Natural killer cell (primary cell): ENCODE measurements at regions of chr14 and their contacts with region 1.

Region 1: DNA sequence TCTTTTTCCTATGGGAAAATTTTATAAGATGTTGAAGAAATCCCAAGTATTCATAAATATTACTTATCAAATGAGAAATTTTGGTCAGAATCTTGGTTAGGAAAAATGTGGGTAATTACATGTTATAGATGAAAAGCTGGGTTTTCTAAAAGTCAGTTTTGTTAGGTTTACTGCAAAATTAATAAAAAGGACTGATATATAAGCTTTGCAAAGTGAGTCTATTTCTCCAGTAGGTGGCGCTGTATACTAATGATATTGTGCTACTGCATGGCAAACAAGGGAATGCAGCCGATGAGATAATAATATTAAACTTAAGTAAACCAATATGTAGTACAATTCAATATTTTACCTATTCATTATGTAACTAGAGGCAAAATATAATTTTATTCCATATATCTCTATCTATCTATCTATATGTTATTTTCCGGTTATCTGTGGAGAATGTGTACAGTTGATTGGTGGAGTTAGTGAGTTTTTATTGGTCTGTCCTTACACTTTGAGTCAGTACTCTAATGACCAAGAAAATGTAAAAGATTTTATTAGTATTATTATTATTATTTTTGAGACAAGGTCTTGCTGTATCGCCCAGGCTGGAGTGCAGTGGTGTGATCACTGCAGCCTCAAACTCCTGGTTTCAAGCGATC is 32.9 kb downstream of the MIPOL1 start:
- DNase-seq: peak in 1 of 2 donors; percentile 40
- ATAC-seq: no peak
- H3K4me3 ChIP-seq: no peak overlapping the region
- H3K4me3 Mint-ChIP-seq: no peak overlapping the region
- H3K27ac ChIP-seq: no peak overlapping the region
- H3K27ac Mint-ChIP-seq: no peak overlapping the region
- H3K4me1 ChIP-seq: no peaks in the 10 kb centered on the region
- H3K4me1 Mint-ChIP-seq: no peaks in the 10 kb centered on the region
- H3K27me3 ChIP-seq: no peaks in the 10 kb centered on the region
- H3K27me3 Mint-ChIP-seq: no peaks in the 10 kb centered on the region
- CTCF ChIP-seq: peak; percentile 58

Region 2: DNA sequence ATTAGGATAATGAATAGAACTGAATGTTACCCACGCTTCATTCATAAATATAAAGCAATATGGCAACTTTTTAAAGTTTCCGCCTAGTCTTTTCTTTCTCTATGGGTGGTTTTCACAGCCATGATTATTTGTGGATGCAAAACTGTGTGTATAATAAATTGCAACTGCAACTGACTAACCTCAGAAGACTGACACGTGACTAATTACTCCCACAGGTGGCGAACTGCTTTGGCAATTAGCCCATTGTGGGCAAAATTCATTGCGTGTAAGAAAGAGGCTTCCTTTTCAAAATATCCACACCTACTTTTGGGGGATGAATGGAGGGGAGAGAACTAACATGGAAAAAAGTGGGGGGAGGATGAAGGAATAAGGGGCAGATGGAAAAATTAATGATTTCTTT is 137.3 kb before region 1 on chr14:
- intact Hi-C with region 1: no loop called
- DNase-seq: no peak
- ATAC-seq: no peak
- H3K4me3 ChIP-seq: no peak overlapping the region
- H3K4me3 Mint-ChIP-seq: no peak overlapping the region
- H3K27ac ChIP-seq: no peak overlapping the region
- H3K27ac Mint-ChIP-seq: no peak overlapping the region
- H3K4me1 ChIP-seq: no peaks in the 10 kb centered on the region
- H3K4me1 Mint-ChIP-seq: no peaks in the 10 kb centered on the region
- H3K27me3 ChIP-seq: no peaks in the 10 kb centered on the region
- H3K27me3 Mint-ChIP-seq: no peaks in the 10 kb centered on the region
- CTCF ChIP-seq: no peak

Region 3: GRCh38 chr14:37202265-37202664 is 28.4 kb before region 1 on chr14:
- intact Hi-C with region 1: no loop called
- DNase-seq: no peak
- ATAC-seq: no peak
- H3K4me3 ChIP-seq: no peak overlapping the region
- H3K4me3 Mint-ChIP-seq: no peak overlapping the region
- H3K27ac ChIP-seq: no peak overlapping the region
- H3K27ac Mint-ChIP-seq: no peak overlapping the region
- H3K4me1 ChIP-seq: no peaks in the 10 kb centered on the region
- H3K4me1 Mint-ChIP-seq: no peaks in the 10 kb centered on the region
- H3K27me3 ChIP-seq: peaks cover 2% of the 10 kb centered on the region
- H3K27me3 Mint-ChIP-seq: peaks cover 0 to 8% of the 10 kb centered on the region in 2 donors
- CTCF ChIP-seq: no peak

Region 4: DNA sequence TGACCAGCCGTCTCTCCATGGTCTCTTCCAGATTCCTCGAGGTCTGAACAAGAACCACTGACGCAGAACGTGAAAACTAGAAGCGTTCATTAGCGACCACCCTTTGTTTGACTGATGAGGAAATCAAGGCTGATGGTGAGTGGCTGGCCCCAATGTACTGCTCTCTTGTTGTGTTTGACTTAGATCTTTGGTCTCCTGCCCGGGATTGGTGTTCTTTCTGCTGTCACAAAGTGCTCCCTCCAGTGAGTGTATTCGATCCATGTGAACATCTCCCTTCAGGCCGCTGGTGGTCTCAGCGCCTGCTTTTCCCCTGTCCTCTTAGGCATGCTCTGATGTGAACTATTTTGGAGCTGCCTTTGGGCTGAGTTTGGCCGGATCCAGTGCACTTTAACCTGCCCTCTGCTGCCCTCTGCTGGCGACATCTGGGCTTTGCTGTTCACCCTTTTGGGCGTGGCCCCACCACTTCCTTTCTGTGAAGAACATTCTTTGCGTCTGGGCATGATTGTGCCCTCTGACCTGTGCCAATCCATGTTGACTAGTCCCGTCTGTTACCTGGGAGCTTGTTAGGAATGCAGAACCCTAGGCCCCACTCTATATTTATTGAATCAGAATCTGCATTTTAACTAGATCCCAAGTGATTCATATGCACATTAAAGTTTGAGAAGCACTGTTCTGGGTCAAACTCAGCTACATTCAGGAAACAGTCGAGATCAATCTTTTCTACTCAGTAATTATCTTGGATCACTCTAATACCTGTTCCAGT is 643.9 kb after region 1 on chr14:
- intact Hi-C with region 1: loop called (anchors 5 kb)
- DNase-seq: peak; percentile 65 to 80
- ATAC-seq: peak; percentile 87 to 95 (median 88)
- H3K4me3 ChIP-seq: no peak overlapping the region
- H3K4me3 Mint-ChIP-seq: no peak overlapping the region
- H3K27ac ChIP-seq: no peak overlapping the region
- H3K27ac Mint-ChIP-seq: no peak overlapping the region
- H3K4me1 ChIP-seq: peaks cover 4% of the 10 kb centered on the region
- H3K4me1 Mint-ChIP-seq: peaks cover 8 to 9% of the 10 kb centered on the region in 2 donors
- H3K27me3 ChIP-seq: no peaks in the 10 kb centered on the region
- H3K27me3 Mint-ChIP-seq: peaks cover 16 to 19% of the 10 kb centered on the region in 2 donors
- CTCF ChIP-seq: peak; percentile 62